Adrenal gland (tissue), 19 donors: ENCODE measurements at regions of chr2 and their contacts with region 1.

Region 1: DNA sequence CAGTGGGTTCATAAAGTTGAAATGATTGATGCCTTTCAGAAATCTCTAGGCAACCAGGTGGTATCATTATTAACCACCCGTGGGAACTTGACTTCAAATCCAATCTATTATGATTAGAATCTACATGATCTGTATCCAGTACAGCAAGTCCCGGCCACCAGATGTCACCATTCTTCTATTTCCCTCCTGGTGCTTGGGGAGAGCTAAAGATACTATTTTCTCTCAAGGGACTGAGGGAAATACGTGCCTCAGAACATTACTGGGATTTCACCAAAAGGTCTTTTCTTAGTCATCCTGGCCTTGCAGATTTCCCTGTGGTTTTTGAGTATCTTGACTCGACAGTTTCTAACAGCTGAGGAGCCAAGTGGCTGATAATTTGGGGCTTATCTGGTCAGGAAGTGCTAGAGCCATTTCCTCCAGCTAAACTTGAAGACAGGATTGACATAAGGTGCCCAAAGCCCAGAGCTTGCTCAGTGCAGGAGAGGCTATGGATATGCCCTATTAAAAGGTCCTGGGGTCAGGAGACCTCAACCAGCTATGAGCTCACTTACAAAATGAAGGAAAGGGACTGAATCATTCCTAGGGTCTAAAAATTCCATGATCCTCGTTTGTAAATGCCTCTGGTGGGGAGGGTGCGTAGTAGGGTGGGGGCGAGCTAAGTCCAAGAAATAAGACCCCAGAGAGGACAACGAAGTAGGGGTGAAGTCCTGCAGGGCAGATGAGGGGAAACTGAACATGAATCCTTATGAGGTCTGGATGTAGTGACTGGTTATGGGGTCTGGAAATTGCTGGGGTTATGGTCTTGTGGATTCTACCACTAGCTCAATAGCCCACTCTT is 135.4 kb upstream of the MGAT5 start:
- DNase-seq: peak; percentile 91 to 98 (median 93)
- H3K4me3 ChIP-seq: no peak overlapping the region
- H3K27ac ChIP-seq: peak overlapping the region in 4 of 5 donors; percentile 28 to 95 (median 64)
- H3K4me1 ChIP-seq: peaks cover 0 to 29% of the 10 kb centered on the region in 2 donors
- H3K27me3 ChIP-seq: no peaks in the 10 kb centered on the region
- CTCF ChIP-seq: peak; percentile 60 to 96 (median 89)
- POLR2A ChIP-seq: no peak

Region 2: GRCh38 chr2:133886735-133887660 is 231.5 kb before region 1 on chr2:
- intact Hi-C with region 1: loop called in 1 of 2 experiments (anchors 5 kb)
- DNase-seq: peak; percentile 65 to 91 (median 82)
- H3K4me3 ChIP-seq: no peak overlapping the region
- H3K27ac ChIP-seq: no peak overlapping the region
- H3K4me1 ChIP-seq: no peaks in the 10 kb centered on the region
- H3K27me3 ChIP-seq: no peaks in the 10 kb centered on the region
- CTCF ChIP-seq: peak; percentile 52 to 78 (median 66)
- POLR2A ChIP-seq: no peak

Region 3: GRCh38 chr2:134193006-134193405 is 74.5 kb after region 1 on chr2:
- intact Hi-C with region 1: loop called in 1 of 2 experiments (anchors 5 kb)
- DNase-seq: peak; percentile 58 to 75 (median 71)
- H3K4me3 ChIP-seq: no peak overlapping the region
- H3K27ac ChIP-seq: peak overlapping the region in 4 of 5 donors; percentile 54 to 84 (median 75)
- H3K4me1 ChIP-seq: peaks cover 16 to 33% of the 10 kb centered on the region in 2 donors
- H3K27me3 ChIP-seq: no peaks in the 10 kb centered on the region
- CTCF ChIP-seq: no peak
- POLR2A ChIP-seq: peak in 1 of 2 donors; percentile 30

Region 4: DNA sequence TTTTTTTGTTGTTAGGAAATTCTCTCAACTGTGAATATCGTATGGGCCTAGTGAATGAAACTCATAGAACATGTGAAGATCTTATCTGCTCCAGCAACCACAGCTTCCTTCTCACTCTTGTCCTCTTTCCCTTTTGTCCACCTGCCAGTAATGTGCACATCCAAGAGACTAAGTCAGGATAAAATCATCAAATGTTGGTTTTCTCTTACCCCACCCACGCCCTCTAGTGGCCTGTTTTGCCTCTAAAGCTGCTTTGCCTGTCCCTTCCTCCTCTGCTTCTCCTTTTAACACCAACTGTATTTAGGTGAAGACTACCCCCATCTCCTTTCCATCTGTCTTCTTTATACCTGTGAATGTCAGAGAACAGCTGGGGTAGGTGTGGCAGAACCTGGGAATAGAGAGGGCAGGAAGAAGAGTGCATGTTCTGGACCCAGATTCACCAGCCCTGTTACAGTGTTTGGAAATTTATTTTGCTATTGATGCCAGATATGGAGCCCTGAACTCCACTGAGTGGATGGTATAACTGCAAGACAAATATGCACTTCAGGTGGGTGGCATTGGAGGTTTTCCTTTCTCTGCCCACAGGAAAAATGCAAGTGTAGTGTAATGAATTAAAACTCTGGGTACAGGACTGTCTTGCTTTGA is 127.0 kb after region 1 on chr2:
- intact Hi-C with region 1: loop called (anchors 5 to 10 kb)
- DNase-seq: peak; percentile 73 to 94 (median 85)
- H3K4me3 ChIP-seq: no peak overlapping the region
- H3K27ac ChIP-seq: no peak overlapping the region
- H3K4me1 ChIP-seq: peaks cover 0 to 7% of the 10 kb centered on the region in 2 donors
- H3K27me3 ChIP-seq: no peaks in the 10 kb centered on the region
- CTCF ChIP-seq: peak; percentile 63 to 87 (median 78)
- POLR2A ChIP-seq: no peak

Region 5: GRCh38 chr2:134432435-134432883 is 314.0 kb after region 1 on chr2:
- intact Hi-C with region 1: no loop called
- DNase-seq: no peak
- H3K4me3 ChIP-seq: no peak overlapping the region
- H3K27ac ChIP-seq: no peak overlapping the region
- H3K4me1 ChIP-seq: no peaks in the 10 kb centered on the region
- H3K27me3 ChIP-seq: no peaks in the 10 kb centered on the region
- CTCF ChIP-seq: no peak
- POLR2A ChIP-seq: no peak

Region 6: GRCh38 chr2:134457765-134458472 is 339.4 kb after region 1 on chr2:
- intact Hi-C with region 1: loop called in 1 of 2 experiments (anchors 10 kb)
- DNase-seq: no peak
- H3K4me3 ChIP-seq: no peak overlapping the region
- H3K27ac ChIP-seq: no peak overlapping the region
- H3K4me1 ChIP-seq: no peaks in the 10 kb centered on the region
- H3K27me3 ChIP-seq: no peaks in the 10 kb centered on the region
- CTCF ChIP-seq: no peak
- POLR2A ChIP-seq: no peak